ENCODE measurements at regions of chr12 and their contacts with region 1.

Region 1: GRCh38 chr12:40152783-40153383 is 47.0 kb upstream of the SLC2A13 start:
- DNase-seq: peak; percentile 45
- H3K4me3 ChIP-seq: no peak overlapping the region
- H3K27ac ChIP-seq: no peak overlapping the region
- H3K4me1 ChIP-seq: no peaks in the 10 kb centered on the region
- H3K27me3 ChIP-seq: no peaks in the 10 kb centered on the region

Region 2: DNA sequence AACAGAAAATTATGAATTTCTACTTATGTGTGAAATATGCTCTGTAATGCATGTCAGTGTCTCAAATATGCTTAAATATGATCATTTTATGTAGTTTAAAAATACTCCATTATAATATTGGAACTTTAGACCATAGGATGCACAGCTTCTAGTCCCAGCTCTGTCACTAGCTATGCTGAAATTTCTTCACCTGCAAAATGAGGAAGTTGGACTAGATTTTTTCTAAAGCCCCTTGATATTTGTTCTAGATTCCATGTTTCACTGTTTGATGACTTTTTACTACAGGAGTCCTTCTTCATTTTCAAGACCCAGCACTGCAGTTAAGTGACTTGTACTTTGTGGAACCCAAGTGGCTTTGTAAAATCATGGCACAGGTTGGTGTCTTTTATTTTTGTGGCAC is 162.0 kb after region 1 on chr12:
- in situ Hi-C with region 1: loop called (anchors 5 kb)
- DNase-seq: no peak
- H3K4me3 ChIP-seq: no peak overlapping the region
- H3K27ac ChIP-seq: no peak overlapping the region
- H3K4me1 ChIP-seq: no peaks in the 10 kb centered on the region
- H3K27me3 ChIP-seq: no peaks in the 10 kb centered on the region